Gastrocnemius medialis (tissue), 4 donors: ENCODE measurements at regions of chr9 and their contacts with region 1.

Region 1: DNA sequence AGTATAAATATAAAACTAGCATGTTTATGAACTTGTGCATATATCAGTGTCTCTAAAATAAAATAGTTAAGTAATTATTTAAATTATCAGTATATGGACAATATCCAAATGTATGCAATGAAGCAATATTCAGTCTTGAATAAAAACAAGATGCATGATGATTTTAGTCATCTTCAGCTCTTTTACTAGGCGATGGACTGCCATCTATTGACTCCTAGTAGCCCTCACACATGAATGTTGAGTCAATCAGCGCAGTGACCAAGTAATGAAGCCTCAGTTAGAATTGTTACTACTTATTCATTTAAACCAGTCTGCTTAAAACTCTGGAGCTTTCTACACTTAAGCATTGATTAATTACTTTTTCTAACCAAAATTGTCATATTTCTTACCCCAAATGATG is 92.9 kb upstream of the GRHPR start:
- DNase-seq: no peak
- ATAC-seq: no peak
- H3K4me3 ChIP-seq: no peak overlapping the region
- H3K27ac ChIP-seq: no peak overlapping the region
- H3K4me1 ChIP-seq: no peaks in the 10 kb centered on the region
- H3K27me3 ChIP-seq: no peaks in the 10 kb centered on the region
- CTCF ChIP-seq: no peak
- POLR2A ChIP-seq: no peak

Region 2: GRCh38 chr9:36873247-36873875 is 456.2 kb before region 1 on chr9:
- in situ Hi-C with region 1: no loop called
- intact Hi-C with region 1: loop called (anchors 5 kb)
- DNase-seq: peak; percentile 29 to 44
- ATAC-seq: peak; percentile 71 to 81
- H3K4me3 ChIP-seq: no peak overlapping the region
- H3K27ac ChIP-seq: no peak overlapping the region
- H3K4me1 ChIP-seq: no peaks in the 10 kb centered on the region
- H3K27me3 ChIP-seq: no peaks in the 10 kb centered on the region
- CTCF ChIP-seq: peak; percentile 60 to 86 (median 75)
- POLR2A ChIP-seq: no peak